ENCODE measurements at regions of chr7 and their contacts with region 1.

Region 1: GRCh38 chr7:17159500-17160037 is 138.9 kb upstream of the AHR start:
- DNase-seq: peak; percentile 77
- ATAC-seq: peak; percentile 91
- H3K4me3 ChIP-seq: no peak overlapping the region
- H3K27ac ChIP-seq: peak overlapping the region; percentile 9; the same call in 1 of the 2 replicates
- H3K4me1 ChIP-seq: peaks cover 14% of the 10 kb centered on the region
- H3K27me3 ChIP-seq: no peaks in the 10 kb centered on the region
- CTCF ChIP-seq: no peak
- EP300 ChIP-seq: peak; percentile 74 to 86; a peak in 3 of 4 replicates
- POLR2A ChIP-seq: no peak
- RAD21 ChIP-seq: 0 out of 2 replicates have a peak, but pooled peaks have one; percentile 7

Region 2: DNA sequence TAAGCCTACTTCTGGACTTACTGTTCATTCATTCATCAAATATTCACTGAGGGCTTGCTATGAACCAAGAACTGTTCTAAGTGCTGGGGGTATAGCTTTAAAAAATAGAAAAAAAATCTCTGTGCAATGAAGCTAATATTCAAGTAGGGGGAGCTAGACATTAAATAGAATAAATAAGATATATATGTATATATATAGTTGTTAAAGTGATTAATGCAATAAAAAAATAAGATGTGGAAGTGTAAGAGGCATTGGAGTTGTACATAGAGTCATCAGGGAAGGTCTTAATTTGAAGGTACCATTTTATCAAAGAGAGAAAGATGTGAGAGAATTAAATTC is 96.6 kb before region 1 on chr7:
- CTCF ChIA-PET with region 1: interaction called, 5 read pairs
- POLR2A ChIA-PET with region 1: no interaction called
- RAD21 ChIA-PET with region 1: interaction called, 9 read pairs
- SMC1A ChIA-PET with region 1: interaction called, 7 read pairs
- in situ Hi-C with region 1: no loop called
- intact Hi-C with region 1: loop called (anchors 5 kb)
- DNase-seq: no peak
- ATAC-seq: peak; percentile 65
- H3K4me3 ChIP-seq: no peak overlapping the region
- H3K27ac ChIP-seq: no peak overlapping the region
- H3K4me1 ChIP-seq: no peaks in the 10 kb centered on the region
- H3K27me3 ChIP-seq: no peaks in the 10 kb centered on the region
- CTCF ChIP-seq: peak in 2 of 3 experiments; percentile 4 to 8; a peak in 2 of 6 replicates
- EP300 ChIP-seq: no peak
- POLR2A ChIP-seq: no peak
- RAD21 ChIP-seq: peak; percentile 31; the same call in 1 of the 2 replicates

Region 3: DNA sequence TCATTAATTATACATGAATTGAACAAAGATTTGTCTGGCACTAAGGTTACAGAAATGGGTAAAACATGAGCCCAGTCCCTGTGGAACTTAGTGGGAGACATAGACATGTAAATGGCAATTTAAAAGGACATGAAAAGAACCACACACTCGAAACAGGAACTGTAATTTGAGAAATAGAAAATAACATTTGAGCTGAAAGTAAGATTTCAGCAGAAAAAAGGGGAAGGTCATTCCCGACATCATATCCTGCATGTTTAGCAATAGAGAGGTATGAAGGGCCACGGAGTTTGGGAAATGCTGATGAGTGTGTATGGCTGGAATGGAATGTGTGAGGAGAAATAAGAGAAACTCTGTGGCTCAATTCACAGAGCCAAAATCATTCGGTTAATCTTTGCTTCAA is 36.5 kb before region 1 on chr7:
- CTCF ChIA-PET with region 1: no interaction called
- POLR2A ChIA-PET with region 1: no interaction called
- RAD21 ChIA-PET with region 1: interaction called, 6 read pairs
- SMC1A ChIA-PET with region 1: interaction called, 11 read pairs
- in situ Hi-C with region 1: no loop called
- intact Hi-C with region 1: no loop called
- DNase-seq: peak; percentile 34
- ATAC-seq: peak; percentile 65
- H3K4me3 ChIP-seq: no peak overlapping the region
- H3K27ac ChIP-seq: peak overlapping the region; percentile 51; the same call in 1 of the 2 replicates
- H3K4me1 ChIP-seq: peaks cover 28% of the 10 kb centered on the region
- H3K27me3 ChIP-seq: no peaks in the 10 kb centered on the region; a peak in 1 of 4 replicates
- CTCF ChIP-seq: no peak
- EP300 ChIP-seq: peak in 1 of 2 experiments; percentile 37; a peak in 1 of 4 replicates
- POLR2A ChIP-seq: no peak
- RAD21 ChIP-seq: no peak

Region 4: GRCh38 chr7:17185690-17186070 is 26.1 kb after region 1 on chr7:
- CTCF ChIA-PET with region 1: interaction called, 3 read pairs
- POLR2A ChIA-PET with region 1: no interaction called
- RAD21 ChIA-PET with region 1: interaction called, 4 read pairs
- SMC1A ChIA-PET with region 1: interaction called, 6 read pairs
- in situ Hi-C with region 1: no loop called
- intact Hi-C with region 1: loop called (anchors 2 kb)
- DNase-seq: peak; percentile 59
- ATAC-seq: peak; percentile 99
- H3K4me3 ChIP-seq: no peak overlapping the region
- H3K27ac ChIP-seq: 0 out of 2 replicates have a peak overlapping the region, but pooled peaks have one; percentile 4
- H3K4me1 ChIP-seq: peaks cover 4% of the 10 kb centered on the region
- H3K27me3 ChIP-seq: no peaks in the 10 kb centered on the region
- CTCF ChIP-seq: no peak
- EP300 ChIP-seq: peak in 1 of 2 experiments; percentile 92; a peak in 3 of 4 replicates
- POLR2A ChIP-seq: no peak
- RAD21 ChIP-seq: peak; percentile 19; the same call in 1 of the 2 replicates

Region 5: GRCh38 chr7:17234398-17235031 is 74.9 kb after region 1 on chr7:
- CTCF ChIA-PET with region 1: interaction called, 5 read pairs
- POLR2A ChIA-PET with region 1: no interaction called
- RAD21 ChIA-PET with region 1: interaction called, 4 read pairs
- SMC1A ChIA-PET with region 1: interaction called, 3 read pairs
- in situ Hi-C with region 1: no loop called
- intact Hi-C with region 1: loop called (anchors 2 kb)
- DNase-seq: peak; percentile 74
- ATAC-seq: peak; percentile 96
- H3K4me3 ChIP-seq: peak overlapping the region; percentile 46; the same call in 1 of the 2 replicates
- H3K27ac ChIP-seq: peak overlapping the region; percentile 96
- H3K4me1 ChIP-seq: peaks cover 12% of the 10 kb centered on the region
- H3K27me3 ChIP-seq: no peaks in the 10 kb centered on the region
- CTCF ChIP-seq: peak in 1 of 3 experiments; percentile 28; a peak in 1 of 6 replicates
- EP300 ChIP-seq: peak; percentile 95 to 99
- POLR2A ChIP-seq: no peak
- RAD21 ChIP-seq: peak; percentile 39; the same call in 1 of the 2 replicates

Region 6: DNA sequence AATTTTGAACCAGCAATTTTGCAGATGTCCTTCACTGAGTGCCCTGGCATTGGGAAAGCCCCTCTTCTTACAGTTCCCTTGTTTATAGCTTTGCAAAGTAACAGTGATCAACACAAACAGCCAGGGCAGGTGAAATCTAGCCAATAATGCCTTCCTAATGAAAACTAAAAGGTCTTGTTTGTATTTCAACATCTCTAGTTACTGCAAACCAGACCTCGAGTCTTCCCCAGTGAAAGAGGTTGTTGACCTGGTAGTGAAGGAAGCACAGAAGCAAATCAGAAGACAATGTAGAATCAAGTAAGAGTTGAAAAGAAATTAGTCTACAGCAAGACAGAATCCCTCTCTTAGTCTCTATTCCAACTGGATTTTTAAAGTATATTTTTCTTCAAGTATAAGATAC is 549.6 kb after region 1 on chr7:
- CTCF ChIA-PET with region 1: no interaction called
- POLR2A ChIA-PET with region 1: no interaction called
- RAD21 ChIA-PET with region 1: no interaction called
- SMC1A ChIA-PET with region 1: no interaction called
- in situ Hi-C with region 1: no loop called
- intact Hi-C with region 1: no loop called
- DNase-seq: no peak
- ATAC-seq: no peak
- H3K4me3 ChIP-seq: no peak overlapping the region
- H3K27ac ChIP-seq: no peak overlapping the region
- H3K4me1 ChIP-seq: no peaks in the 10 kb centered on the region
- H3K27me3 ChIP-seq: no peaks in the 10 kb centered on the region
- CTCF ChIP-seq: no peak
- EP300 ChIP-seq: no peak
- POLR2A ChIP-seq: no peak
- RAD21 ChIP-seq: no peak

Measured in GM12878 (cell line).